Activated CD4-positive, alpha-beta memory T cell treated with anti-CD3 and anti-CD28 coated beads, Interleukin-2, amount 10 ng/mL, durations not matched to agents 7 days and 5 days (primary cell): ENCODE measurements at regions of chr11 and their contacts with region 1.

Region 1: DNA sequence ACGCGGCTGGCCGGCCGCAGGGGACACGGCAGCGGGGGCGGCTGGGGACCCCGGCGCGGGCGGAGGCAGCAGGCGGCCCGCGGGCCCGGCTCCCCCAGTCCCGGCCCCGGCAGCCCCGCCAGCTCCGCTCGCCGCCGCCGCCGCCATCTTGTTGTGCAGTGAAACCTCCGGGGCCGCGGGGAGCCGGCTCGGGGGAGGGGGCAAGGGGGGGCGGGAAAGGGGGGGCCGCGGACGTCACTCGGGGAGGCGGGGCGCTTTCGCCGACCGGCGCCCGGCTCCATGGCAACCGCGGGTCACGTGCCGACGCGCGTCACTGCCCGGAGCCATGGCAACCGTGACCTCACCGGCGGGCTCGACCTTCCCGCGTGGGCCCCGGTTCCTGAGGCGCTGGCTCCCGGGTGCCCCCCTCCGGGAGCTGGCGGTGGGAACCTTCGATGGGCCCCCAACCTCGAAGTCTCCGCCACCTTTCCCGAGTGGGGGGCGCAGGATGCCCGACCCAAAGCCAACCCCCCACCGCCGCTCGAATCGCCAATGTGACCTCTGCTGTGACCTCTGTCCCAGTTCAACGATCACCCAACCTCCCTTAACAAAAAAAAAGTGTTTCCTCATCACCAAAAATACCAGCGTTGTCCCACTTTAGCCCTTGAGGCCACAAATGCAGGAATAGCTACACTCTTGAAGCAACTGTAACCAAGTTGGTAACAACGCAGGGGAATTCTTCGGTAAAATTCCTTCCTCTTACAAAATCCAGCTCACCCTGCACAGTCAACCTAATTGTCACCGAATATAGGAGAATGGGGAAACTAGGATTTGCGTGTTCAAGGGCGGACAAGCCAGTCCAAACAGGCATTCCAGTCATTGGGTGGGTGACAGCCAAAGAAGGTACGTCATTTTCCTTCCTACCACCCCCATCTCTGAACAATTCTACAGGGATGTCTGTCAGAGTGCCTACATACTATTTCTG is at the start of gene SIK3:
- DNase-seq: peak; percentile 93
- H3K4me3 Mint-ChIP-seq: peak within 1 kb of the TSS; percentile 90
- H3K27ac Mint-ChIP-seq: peak within 1 kb of the TSS; percentile 84
- H3K4me1 Mint-ChIP-seq: peaks cover 61% of the 10 kb centered on the region
- H3K27me3 Mint-ChIP-seq: no peaks in the 10 kb centered on the region
- total RNA-seq, gene SIK3: 36.4 to 43.0 TPM

Region 2: DNA sequence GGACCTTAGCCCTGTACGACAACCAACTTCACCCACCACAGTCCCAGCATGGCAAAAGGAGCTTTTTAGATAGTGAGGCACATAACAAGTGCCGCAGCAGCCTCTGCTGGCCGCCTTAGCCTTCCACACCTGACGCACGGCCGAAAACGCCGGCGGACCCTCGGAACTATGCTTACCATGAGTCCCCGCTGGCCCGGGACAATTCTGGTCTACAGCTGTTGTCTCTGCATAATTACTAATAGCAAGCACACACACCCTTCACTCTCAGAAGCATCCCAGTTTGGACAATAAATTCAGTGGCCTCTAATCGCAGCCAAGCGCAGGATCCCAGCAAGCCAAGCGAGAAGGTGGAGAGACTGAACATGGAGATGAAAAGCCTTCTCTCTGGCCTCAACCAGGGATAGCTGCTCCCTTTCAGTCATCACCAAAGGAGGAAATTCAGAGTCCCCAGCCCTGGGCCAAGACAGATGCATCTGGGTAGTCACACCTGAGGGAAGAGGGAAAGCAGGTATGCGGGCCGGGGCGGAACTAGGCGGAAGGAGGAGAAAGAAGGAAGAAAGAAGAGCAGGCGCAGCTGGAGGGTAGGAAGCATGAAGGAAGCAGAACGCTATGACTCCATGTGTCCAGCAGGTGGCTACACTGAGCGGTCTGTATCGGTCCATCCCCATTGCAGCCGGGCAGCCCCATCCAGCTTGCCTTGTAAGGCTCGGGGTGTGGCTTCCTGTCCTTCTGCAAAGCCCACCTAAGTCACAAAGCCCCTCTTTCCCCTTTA is 366.1 kb before region 1 on chr11:
- CTCF ChIA-PET with region 1: interaction called, 35 read pairs
- POLR2A ChIA-PET with region 1: no interaction called
- DNase-seq: peak; percentile 67
- H3K4me3 Mint-ChIP-seq: no peak overlapping the region
- H3K27ac Mint-ChIP-seq: no peak overlapping the region
- H3K4me1 Mint-ChIP-seq: peaks cover 6% of the 10 kb centered on the region
- H3K27me3 Mint-ChIP-seq: no peaks in the 10 kb centered on the region

Region 3: GRCh38 chr11:116853461-116854073 is 245.0 kb before region 1 on chr11:
- CTCF ChIA-PET with region 1: interaction called, 4 read pairs
- POLR2A ChIA-PET with region 1: interaction called, 58 read pairs
- DNase-seq: peak; percentile 75
- H3K4me3 Mint-ChIP-seq: peak overlapping the region; percentile 67
- H3K27ac Mint-ChIP-seq: peak overlapping the region; percentile 96
- H3K4me1 Mint-ChIP-seq: peaks cover 64% of the 10 kb centered on the region
- H3K27me3 Mint-ChIP-seq: no peaks in the 10 kb centered on the region

Region 4: DNA sequence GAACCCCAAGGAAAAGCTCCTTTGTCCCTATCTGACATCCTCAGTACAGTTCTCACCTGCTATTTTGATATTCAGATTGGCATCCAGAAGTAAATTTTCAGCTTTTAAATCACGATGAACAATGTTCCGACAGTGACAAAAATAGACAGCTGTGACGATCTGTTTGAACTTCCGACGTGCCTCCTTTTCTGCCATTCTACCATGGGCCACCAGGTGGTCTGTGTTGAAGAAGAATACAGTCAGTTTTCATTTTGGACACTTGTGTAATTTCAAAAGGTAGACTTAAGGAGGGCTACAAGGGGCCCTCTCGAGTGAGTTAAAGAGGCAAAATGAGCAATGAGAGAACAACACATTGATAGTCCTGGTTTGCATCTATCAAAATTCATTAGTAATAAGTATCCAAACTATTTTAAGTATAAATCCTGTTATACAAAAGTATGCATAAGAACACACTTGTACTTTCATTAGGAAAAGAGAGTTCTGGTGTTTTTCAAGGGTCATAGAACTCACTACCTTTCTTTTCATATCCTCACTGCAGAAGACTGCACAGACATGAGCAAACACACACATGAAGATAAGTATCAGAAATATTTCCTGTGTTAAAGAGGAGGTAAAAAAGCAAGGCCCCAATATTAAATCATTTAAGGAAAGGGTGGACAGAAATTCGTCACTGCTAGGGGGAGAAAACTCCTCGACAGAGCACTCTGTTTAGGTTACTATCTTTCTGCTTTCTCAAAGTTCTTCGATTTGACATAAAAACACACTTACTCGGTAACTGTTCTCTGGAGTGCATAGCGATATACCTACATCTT is 171.2 kb before region 1 on chr11:
- CTCF ChIA-PET with region 1: interaction called, 13 read pairs
- POLR2A ChIA-PET with region 1: interaction called, 51 read pairs
- DNase-seq: peak; percentile 61
- H3K4me3 Mint-ChIP-seq: peak overlapping the region; percentile 36
- H3K27ac Mint-ChIP-seq: peak overlapping the region; percentile 86
- H3K4me1 Mint-ChIP-seq: peaks cover 81% of the 10 kb centered on the region
- H3K27me3 Mint-ChIP-seq: no peaks in the 10 kb centered on the region

Region 5: DNA sequence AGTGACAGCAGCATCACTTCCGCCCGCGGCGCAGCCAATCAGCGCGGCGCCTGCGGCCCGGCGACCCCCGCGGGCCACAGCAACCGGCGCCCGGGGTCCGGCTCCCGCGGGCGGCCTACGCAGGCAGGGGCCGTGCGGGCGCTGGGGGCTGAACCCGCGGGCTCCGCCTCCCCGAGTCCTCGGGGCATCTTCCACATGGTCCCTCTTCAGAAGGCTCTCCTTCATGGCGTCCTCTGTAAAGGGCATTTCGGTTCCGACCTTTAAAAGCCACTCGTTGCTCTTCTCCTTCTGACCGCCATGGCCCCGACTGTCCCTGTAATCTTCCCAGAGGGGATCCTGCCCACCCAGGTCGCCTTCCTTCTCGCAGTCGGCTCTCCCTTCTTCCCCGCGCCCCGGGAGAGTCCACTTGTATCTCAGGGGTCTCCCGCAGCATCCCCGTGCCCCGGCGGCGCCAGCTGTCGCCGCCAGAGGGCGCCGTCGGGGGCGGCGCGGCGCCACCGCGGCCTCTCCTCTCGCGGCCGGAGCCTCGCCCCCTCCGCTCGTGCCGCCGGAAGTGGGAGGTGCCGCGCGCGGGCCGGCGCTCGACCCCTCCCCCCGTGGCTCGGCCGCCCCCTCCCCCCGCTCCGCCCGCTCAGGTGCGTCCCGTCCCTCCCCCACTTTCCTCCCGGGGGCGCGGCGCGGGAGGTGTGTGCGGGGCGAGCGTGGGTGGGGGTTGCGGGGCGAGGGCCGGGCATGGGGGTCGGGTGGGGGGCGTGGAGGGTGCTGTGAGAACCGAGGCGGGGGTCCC is 133.7 kb after region 1 on chr11 and contains the start of gene RNF214:
- CTCF ChIA-PET with region 1: interaction called, 3 read pairs
- POLR2A ChIA-PET with region 1: interaction called, 12 read pairs
- DNase-seq: peak; percentile 81
- H3K4me3 Mint-ChIP-seq: peak within 1 kb of the TSS; percentile 100
- H3K27ac Mint-ChIP-seq: peak within 1 kb of the TSS; percentile 100
- H3K4me1 Mint-ChIP-seq: peaks cover 42% of the 10 kb centered on the region
- H3K27me3 Mint-ChIP-seq: no peaks in the 10 kb centered on the region
- total RNA-seq, gene RNF214: 23.1 to 23.6 TPM